AG04449 (cell line): ENCODE measurements at regions of chr3 and their contacts with region 1.

Region 1: DNA sequence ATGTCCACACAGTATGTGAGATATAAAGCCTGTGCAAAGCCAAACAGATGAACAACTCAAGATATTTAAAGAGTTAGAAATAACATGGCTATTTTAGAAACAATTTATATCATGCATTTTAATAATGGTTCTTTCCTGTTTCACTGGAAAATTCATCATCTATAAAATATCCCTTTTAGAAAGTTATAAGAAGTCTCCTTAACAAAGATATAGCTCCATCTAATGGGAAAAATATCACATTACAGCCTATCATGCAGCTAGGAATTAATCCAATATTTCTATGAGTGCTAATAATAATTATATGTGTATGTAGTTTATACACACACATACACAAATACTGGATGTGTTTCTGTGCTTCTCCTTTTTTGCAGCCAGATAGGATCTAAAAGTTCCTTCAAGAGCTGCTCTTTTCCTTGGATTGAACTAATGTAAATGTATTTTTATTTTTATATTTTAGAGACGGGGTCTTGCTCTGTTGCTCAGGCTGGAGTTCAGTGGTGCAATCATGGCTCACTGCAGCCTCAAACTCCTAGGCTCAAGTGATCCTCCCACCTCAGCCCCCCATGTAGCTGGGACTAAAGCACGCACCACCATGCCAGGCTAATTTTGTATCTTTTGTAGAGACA is 21.6 kb downstream of the RPL22L1 start:
- DNase-seq: no peak
- H3K4me3 ChIP-seq: no peak overlapping the region
- CTCF ChIP-seq: peak; percentile 14

Region 2: DNA sequence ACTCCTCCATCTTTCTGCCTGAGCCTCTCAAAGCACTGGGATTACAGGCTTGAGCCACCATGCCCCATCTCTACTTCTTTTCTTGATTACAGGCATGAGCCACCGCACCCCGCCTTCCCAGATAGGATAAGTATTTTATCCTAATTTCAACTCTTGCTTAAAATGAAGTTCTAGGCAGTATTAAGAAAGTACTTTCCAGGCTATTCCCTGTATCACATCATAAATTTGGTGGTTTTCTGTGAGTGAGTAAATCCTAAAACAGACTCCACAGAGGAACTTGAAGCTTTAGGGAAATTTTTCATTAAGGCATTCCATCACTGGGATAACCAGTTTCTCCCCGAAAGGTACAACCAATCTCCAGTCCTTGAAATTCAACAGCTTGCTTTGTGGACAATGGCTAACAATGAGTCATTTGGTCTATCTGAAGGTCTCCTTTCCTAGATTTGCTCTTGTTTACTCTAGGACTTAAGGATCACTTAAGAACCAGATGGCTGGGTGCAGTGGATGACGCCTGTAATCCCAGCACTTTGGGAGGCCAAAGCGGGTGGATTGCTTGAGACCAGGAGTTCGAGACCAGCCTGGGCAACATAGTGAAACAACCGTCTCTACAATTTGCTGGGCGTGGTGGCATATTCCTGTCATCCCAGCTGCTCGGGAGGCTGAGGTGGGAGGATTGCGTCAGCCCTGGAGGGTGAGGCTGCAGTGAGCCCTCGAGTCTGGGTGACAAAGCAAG is 540.6 kb before region 1 on chr3:
- CTCF ChIA-PET with region 1: interaction called, 36 read pairs
- POLR2A ChIA-PET with region 1: no interaction called
- DNase-seq: no peak
- H3K4me3 ChIP-seq: no peak overlapping the region
- CTCF ChIP-seq: no peak

Region 3: GRCh38 chr3:170660139-170660538 is 188.3 kb before region 1 on chr3:
- CTCF ChIA-PET with region 1: no interaction called
- POLR2A ChIA-PET with region 1: no interaction called
- DNase-seq: no peak
- H3K4me3 ChIP-seq: no peak overlapping the region
- CTCF ChIP-seq: no peak

Region 4: GRCh38 chr3:170829546-170830272 is 18.7 kb before region 1 on chr3:
- CTCF ChIA-PET with region 1: interaction called, 20 read pairs
- POLR2A ChIA-PET with region 1: no interaction called
- DNase-seq: no peak
- H3K4me3 ChIP-seq: no peak overlapping the region
- CTCF ChIP-seq: no peak

Region 5: GRCh38 chr3:170835336-170835735 is 13.1 kb before region 1 on chr3:
- CTCF ChIA-PET with region 1: interaction called, 20 read pairs
- POLR2A ChIA-PET with region 1: no interaction called
- DNase-seq: no peak
- H3K4me3 ChIP-seq: no peak overlapping the region
- CTCF ChIP-seq: no peak

Region 6: GRCh38 chr3:170862618-170863374 is 14.4 kb after region 1 on chr3:
- CTCF ChIA-PET with region 1: interaction called, 22 read pairs
- POLR2A ChIA-PET with region 1: no interaction called
- DNase-seq: no peak
- H3K4me3 ChIP-seq: no peak overlapping the region
- CTCF ChIP-seq: no peak

Region 7: DNA sequence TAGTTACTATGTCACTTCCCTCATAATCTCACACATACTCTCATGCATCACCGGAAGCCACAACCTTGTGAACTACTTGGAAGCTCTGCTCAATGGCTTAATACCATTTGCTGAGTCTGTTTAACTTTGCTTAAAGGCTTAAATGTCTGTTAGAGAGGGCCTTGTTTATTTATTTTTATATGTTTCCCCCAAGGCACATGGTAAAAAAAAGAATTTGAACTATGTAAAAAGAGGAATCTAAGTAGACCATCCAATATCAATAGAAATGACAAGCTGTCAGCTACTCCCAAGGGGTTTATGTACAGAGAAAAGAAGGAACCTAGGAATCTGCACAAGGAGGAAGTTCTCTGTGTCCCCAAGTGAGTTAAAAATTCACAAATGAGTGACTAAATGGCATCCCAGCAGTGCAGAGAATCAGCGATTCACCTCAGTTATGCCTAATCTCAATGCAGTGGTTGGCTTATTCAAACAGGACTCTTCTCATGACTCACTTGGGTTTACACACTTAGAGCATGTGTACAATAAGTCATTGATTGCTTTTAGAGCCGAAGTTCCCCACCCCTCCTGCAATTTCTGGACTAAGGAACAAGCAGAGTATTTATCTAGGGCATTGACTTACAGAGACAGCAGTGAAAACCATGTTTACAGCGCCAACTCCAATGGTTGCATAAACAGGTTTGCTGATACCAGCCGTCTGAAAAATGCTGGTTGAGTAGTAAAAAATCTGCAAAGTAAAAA is 153.7 kb after region 1 on chr3:
- CTCF ChIA-PET with region 1: no interaction called
- POLR2A ChIA-PET with region 1: no interaction called
- DNase-seq: no peak
- H3K4me3 ChIP-seq: no peak overlapping the region
- CTCF ChIP-seq: no peak